H1 (cell line): ENCODE measurements at regions of chr5 and their contacts with region 1.

Region 1: GRCh38 chr5:66742083-66742895 is 146.1 kb downstream of the MAST4 start:
- DNase-seq: no peak
- H3K4me3 ChIP-seq: no peak overlapping the region
- H3K27ac ChIP-seq: no peak overlapping the region
- H3K4me1 ChIP-seq: no peaks in the 10 kb centered on the region
- H3K27me3 ChIP-seq: no peaks in the 10 kb centered on the region
- CTCF ChIP-seq: peak; percentile 59 to 66 (median 60)
- EP300 ChIP-seq: no peak
- POLR2A ChIP-seq: no peak
- RAD21 ChIP-seq: peak; percentile 51 to 57; a peak in 3 of 4 replicates

Region 2: GRCh38 chr5:66724349-66725139 is 17.7 kb before region 1 on chr5:
- CTCF ChIA-PET with region 1: interaction called, 40 read pairs
- POLR2A ChIA-PET with region 1: interaction called, 3 read pairs
- DNase-seq: no peak
- H3K4me3 ChIP-seq: no peak overlapping the region
- H3K27ac ChIP-seq: no peak overlapping the region
- H3K4me1 ChIP-seq: peaks cover 0 to 2% (median 0%) of the 10 kb centered on the region in 4 experiments; a peak in 3 of 7 replicates
- H3K27me3 ChIP-seq: no peaks in the 10 kb centered on the region
- CTCF ChIP-seq: no peak
- EP300 ChIP-seq: no peak
- POLR2A ChIP-seq: no peak
- RAD21 ChIP-seq: no peak

Region 3: GRCh38 chr5:66764982-66765381 is 22.7 kb after region 1 on chr5:
- CTCF ChIA-PET with region 1: interaction called, 14 read pairs
- POLR2A ChIA-PET with region 1: no interaction called
- DNase-seq: no peak
- H3K4me3 ChIP-seq: no peak overlapping the region
- H3K27ac ChIP-seq: no peak overlapping the region
- H3K4me1 ChIP-seq: no peaks in the 10 kb centered on the region
- H3K27me3 ChIP-seq: peaks cover 0 to 1% (median 0%) of the 10 kb centered on the region in 4 experiments; a peak in 1 of 7 replicates
- CTCF ChIP-seq: no peak
- EP300 ChIP-seq: no peak
- POLR2A ChIP-seq: no peak
- RAD21 ChIP-seq: no peak

Region 4: DNA sequence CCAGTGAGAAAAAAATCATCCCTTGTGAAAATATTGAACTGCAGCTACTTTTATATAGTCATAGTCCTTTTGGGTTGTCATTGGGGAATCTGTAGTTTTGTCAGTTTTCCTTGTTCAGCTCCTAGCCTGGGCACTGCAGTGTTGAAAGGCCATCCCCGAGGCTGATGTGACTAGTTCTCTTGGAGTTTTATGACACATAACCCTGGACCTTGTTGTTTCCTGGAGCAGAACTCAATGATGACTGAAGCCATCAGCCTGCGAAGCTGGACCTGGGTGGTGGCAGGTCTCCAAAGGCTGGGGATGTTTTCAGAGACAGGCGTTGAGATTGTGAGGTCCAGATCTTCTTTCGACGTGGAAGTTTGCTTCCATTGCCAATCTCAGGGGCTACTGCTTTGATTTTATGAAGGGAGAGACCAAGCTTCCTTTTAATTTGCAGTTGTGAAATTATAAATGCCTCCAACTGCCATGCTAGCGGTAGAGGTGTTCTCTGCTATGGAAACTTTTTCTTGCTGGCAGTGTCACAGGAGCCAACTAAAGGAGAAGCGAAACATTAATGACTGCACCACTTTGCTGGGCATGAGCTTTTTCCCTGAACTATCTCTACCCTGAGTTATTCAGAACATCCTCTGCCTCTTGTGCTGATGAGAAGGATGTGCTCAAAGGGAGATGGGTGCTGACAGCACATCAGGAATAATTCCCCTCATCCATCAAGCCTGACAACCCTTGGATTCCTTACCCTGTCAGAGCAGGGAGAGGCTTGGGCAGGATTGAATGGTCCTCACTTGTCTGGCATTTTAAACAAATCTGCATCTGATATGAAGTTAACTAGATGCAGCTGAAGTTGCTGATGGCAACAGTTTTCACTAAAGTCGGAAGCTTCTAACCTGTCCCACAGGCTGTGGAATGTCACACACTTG is 63.5 kb after region 1 on chr5:
- CTCF ChIA-PET with region 1: no interaction called
- POLR2A ChIA-PET with region 1: no interaction called
- DNase-seq: no peak
- H3K4me3 ChIP-seq: no peak overlapping the region
- H3K27ac ChIP-seq: no peak overlapping the region
- H3K4me1 ChIP-seq: no peaks in the 10 kb centered on the region
- H3K27me3 ChIP-seq: no peaks in the 10 kb centered on the region
- CTCF ChIP-seq: no peak
- EP300 ChIP-seq: no peak
- POLR2A ChIP-seq: no peak
- RAD21 ChIP-seq: no peak